Motor neuron (in vitro differentiated cells): ENCODE measurements at regions of chr19 and their contacts with region 1.

Region 1: DNA sequence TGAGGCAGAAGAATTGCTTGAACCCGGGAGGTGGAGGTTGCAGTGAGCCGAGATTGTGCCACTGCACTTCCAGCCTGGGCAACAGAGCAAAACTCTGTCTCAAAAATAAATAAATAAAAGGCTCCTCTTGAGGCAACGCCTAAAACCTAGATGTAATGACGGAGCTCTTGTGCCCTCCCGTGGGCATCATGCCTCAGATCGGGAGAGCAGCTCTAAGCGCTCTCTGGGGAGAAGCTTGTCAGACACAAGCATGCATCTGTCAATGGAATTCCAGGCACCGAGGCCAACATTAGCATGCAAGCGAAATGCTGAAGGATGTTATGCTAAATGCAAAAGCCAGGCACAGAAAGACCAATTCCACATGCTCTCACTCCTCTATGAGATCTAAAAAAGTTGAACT is 45.6 kb upstream of the MRI1 start:
- ATAC-seq: peak; percentile 83 to 99 (median 98)
- H3K4me3 ChIP-seq: no peak overlapping the region
- H3K27ac ChIP-seq: no peak overlapping the region
- H3K4me1 ChIP-seq: peaks cover 0 to 2% of the 10 kb centered on the region in 2 donors

Region 2: GRCh38 chr19:13277104-13277809 is 441.5 kb before region 1 on chr19:
- in situ Hi-C with region 1: loop called in 3 of 9 experiments (anchors 10 to 25 kb)
- ATAC-seq: peak; percentile 82 to 99 (median 86)
- H3K4me3 ChIP-seq: no peak overlapping the region
- H3K27ac ChIP-seq: no peak overlapping the region
- H3K4me1 ChIP-seq: no peaks in the 10 kb centered on the region

Region 3: GRCh38 chr19:13597640-13598039 is 121.1 kb before region 1 on chr19:
- in situ Hi-C with region 1: loop called in 5 of 9 experiments (anchors 10 to 25 kb)
- ATAC-seq: peak; percentile 91 to 99 (median 96)
- H3K4me3 ChIP-seq: no peak overlapping the region
- H3K27ac ChIP-seq: no peak overlapping the region
- H3K4me1 ChIP-seq: peaks cover 0 to 2% of the 10 kb centered on the region in 2 donors

Region 4: DNA sequence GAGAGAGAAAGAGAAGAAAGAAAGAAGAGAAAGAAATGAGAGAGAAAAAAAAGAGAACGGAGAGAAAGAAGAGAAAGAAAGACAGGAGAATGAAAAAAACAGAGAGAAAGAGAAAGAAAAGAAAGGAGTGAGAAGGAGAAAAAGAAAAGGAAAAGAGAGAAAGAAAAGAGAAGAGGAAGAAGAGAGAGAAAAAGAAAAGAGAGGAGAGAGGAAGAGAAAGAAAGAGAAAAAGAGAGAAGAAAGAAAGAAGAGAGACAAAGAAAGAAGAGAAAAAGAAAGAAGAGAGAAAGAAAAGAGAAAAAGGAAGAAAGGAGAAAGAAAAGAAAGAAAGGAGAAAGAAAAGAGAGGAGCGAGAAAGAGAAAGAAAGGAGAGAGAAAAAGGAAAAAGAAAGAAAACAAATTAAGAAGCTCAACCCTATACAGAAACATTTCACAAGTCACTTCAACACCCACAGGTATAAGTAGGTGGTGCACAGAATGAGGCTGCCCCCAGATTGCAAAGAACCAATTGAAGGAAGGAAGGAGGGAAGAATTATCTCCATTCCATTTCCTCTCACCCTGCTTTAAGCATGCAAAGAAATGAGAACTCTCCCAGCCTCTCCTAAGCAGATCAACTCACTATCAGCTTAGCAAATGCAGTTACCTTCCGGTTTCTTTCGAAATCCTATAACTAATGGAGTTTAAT is 113.7 kb before region 1 on chr19:
- in situ Hi-C with region 1: loop called in 4 of 9 experiments (anchors 10 to 25 kb)
- ATAC-seq: no peak
- H3K4me3 ChIP-seq: no peak overlapping the region
- H3K27ac ChIP-seq: no peak overlapping the region
- H3K4me1 ChIP-seq: no peaks in the 10 kb centered on the region

Region 5: DNA sequence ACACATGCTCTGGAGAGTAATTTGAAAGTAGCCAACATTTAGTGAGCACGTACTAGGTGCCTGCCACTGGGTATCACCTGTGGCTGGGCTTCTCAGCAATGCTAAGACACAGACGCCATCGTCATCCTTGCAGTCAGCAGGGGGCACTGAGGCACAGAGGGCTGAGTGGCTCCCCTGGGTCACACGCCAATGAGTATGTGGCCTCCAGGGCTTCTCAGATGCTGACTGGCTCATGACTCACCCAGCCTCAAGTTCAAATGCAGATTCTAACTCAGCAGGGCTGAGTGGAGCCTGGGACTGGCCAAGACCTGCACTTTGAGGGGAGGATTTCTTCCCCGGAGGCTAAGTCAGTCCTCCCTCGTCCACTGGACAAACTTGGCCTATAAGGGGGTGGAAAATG is 97.3 kb before region 1 on chr19:
- in situ Hi-C with region 1: loop called in 2 of 9 experiments (anchors 25 kb)
- ATAC-seq: peak; percentile 58 to 98 (median 78)
- H3K4me3 ChIP-seq: no peak overlapping the region
- H3K27ac ChIP-seq: no peak overlapping the region
- H3K4me1 ChIP-seq: peaks cover 24 to 28% of the 10 kb centered on the region in 2 donors